RWPE1 (cell line): ENCODE measurements at regions of chr12 and their contacts with region 1.

Region 1: GRCh38 chr12:45775964-45776363 is 46.5 kb downstream of the ARID2 start:
- DNase-seq: no peak
- H3K27ac ChIP-seq: no peak overlapping the region
- CTCF ChIP-seq: no peak

Region 2: DNA sequence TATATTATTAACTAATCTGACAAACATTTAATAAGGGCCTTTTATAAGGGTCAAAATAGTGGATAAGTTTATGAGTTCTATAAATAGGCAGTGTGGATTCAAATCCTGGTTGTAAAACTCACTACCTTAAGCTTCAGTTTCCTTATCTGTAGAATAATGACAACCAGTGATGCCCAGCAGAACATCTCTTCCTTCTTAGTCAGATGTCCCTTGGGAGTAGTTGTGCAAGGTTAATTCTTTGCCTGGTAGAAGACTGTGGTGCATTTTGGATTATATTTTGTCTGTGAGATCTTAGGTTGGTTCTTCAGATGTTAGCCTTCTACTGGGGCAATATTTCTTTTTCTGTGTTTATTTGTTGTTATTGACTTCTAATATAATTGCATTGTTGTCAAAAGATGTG is 13.1 kb after region 1 on chr12:
- CTCF ChIA-PET with region 1: interaction called, 10 read pairs
- POLR2A ChIA-PET with region 1: no interaction called
- DNase-seq: no peak
- H3K27ac ChIP-seq: no peak overlapping the region
- CTCF ChIP-seq: no peak

Region 3: DNA sequence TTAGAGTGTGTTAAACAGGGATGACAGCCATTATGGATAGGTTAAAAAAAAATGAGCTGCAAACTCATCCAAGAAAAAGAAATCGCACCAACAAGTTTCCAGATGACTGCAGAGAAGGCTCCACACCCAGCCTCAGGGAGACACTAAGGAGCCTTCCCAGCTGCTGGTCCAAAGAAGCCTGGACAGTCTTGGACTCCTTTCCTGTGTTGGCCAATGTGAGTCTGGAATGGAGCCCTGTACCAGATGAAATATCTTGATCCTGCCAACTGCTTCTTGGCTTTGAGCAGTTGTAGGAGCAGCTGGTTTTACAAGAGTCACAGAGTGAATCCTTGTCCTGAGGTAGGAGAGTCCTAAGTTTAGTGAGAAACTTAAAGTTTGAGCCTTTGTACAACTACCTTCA is 448.4 kb after region 1 on chr12:
- CTCF ChIA-PET with region 1: no interaction called
- POLR2A ChIA-PET with region 1: no interaction called
- DNase-seq: no peak
- H3K27ac ChIP-seq: no peak overlapping the region
- CTCF ChIP-seq: no peak